ENCODE measurements at regions of chr14 and their contacts with region 1.

Region 1: GRCh38 chr14:70027785-70028428 is 148.7 kb downstream of the SMOC1 start:
- DNase-seq: peak; percentile 53 to 95 (median 84)

Region 2: DNA sequence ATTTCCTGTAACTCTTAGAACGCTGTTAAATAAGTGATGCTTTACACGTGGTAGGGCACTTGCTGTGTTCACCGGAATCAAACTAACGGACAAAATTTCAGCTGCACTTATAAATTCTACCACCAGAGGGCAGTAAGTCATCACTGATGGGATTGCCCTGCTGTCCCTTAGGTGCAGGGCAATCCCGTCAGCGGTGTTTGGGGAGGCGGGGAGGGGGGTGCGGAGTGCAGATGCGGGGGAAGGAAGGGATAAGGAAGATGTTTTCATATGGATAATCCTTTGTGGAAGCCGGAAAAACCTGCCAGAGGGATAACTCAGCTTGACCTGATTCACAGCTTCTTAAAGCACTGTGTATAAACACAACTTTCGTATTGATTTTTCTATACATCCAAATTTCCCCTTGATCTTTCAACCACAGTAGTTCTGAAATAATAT is 209.1 kb before region 1 on chr14:
- intact Hi-C with region 1: loop called (anchors 5 kb)
- DNase-seq: peak in 36 of 42 donors; percentile 11 to 88 (median 54)

Region 3: GRCh38 chr14:69879175-69880043 is 148.5 kb before region 1 on chr14 and contains the start of gene SMOC1:
- intact Hi-C with region 1: loop called (anchors 5 kb)
- DNase-seq: peak; percentile 47 to 83 (median 74)

Region 4: DNA sequence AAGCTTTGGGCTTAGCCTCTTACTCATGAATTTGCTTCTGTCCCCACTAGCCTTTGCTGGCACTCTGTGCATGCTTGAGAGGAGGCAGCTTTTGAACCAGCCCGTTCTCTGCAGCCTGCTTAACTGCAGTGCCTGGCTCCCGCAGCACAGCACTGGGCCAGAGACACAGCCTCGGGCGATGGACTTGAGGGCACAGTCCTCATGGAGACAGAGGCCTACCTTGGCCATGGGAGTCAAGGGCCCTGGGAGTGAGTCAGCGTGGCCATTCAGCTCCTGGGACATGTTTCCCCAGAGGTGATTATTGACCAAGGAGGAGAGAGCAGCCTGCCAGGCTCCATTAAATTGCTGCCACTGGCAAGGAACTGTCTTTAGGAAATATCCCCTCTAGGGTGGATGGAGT is 55.2 kb before region 1 on chr14:
- intact Hi-C with region 1: no loop called
- DNase-seq: peak in 1 of 42 donors; percentile 66

Region 5: DNA sequence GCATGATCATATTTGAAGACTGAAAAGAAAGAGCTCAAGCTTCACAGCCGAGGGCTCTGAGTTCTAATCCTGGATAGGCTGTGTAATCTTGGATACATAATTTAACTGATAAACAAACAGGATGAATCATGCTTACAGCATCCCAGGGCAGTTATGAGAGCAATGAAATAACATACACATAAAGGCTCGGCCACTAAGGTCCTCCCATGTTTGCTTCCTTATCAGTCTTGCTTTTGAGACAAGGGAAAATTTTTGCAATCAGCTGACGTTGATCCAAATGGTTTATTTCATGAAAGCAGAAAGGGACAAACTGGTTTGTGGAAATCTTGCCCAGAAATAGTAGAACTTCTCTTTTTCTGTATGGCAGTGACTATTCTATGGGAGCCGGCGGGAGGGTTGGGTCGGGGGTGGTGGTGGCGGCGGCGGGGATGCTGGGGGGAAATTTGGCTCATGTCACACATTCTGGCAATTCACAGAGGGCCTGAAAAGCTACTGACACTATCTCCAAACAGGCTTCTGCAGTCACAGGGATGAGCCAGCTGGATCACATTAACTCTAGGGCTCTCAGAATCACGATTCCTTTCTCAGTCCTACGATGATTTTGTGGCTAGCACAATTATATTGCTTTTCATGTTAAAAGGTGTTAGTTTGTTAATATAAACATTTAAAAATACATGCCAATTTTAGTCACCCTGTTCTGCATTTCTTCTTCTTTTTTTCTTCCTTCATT is 36.4 kb after region 1 on chr14:
- intact Hi-C with region 1: no loop called
- DNase-seq: no peak

Region 6: GRCh38 chr14:70086685-70087379 is 58.9 kb after region 1 on chr14:
- intact Hi-C with region 1: no loop called
- DNase-seq: peak in 40 of 42 donors; percentile 7 to 75 (median 46)

Measured in head of caudate nucleus (tissue), 42 donors.